Heart right ventricle (tissue), 16 donors: ENCODE measurements at regions of chr2 and their contacts with region 1.

Region 1: DNA sequence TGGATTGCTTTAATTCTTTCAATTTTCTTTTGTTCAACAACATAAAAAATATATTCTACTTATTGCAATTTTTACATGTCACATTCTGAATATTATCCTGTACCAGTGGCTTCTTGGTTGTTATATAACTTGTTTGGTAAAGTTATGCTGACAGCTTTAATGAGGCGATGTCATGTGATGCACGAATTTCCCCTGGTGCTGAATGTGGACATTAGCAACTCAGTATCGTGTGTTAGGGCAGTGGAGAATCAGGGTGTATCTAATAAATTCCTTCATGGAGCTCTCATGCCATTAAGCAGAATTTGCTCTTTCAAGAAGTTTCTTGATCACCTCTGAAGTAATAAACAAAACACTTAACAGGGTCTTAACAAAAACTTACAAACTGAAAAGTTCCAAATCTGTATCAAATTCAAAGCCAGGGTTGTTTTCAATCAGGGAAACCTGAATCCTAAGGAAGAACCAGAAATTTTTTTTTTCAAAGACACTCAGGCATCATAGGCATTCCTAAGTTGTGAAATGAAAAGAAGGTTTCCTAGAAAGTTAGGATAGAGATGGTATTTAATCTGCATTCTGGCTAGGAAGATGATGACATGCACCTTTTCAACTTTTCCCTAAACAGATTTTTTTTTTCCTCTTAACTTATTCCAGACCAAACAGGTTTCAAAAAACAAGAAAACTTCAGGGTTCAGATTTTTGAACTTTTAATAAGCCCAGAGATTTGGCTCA is 99.8 kb upstream of the DNMT3A start:
- DNase-seq: no peak
- ATAC-seq: no peak
- H3K4me3 ChIP-seq: no peak overlapping the region
- H3K27ac ChIP-seq: no peak overlapping the region
- H3K4me1 ChIP-seq: no peaks in the 10 kb centered on the region
- H3K27me3 ChIP-seq: no peaks in the 10 kb centered on the region
- CTCF ChIP-seq: no peak

Region 2: DNA sequence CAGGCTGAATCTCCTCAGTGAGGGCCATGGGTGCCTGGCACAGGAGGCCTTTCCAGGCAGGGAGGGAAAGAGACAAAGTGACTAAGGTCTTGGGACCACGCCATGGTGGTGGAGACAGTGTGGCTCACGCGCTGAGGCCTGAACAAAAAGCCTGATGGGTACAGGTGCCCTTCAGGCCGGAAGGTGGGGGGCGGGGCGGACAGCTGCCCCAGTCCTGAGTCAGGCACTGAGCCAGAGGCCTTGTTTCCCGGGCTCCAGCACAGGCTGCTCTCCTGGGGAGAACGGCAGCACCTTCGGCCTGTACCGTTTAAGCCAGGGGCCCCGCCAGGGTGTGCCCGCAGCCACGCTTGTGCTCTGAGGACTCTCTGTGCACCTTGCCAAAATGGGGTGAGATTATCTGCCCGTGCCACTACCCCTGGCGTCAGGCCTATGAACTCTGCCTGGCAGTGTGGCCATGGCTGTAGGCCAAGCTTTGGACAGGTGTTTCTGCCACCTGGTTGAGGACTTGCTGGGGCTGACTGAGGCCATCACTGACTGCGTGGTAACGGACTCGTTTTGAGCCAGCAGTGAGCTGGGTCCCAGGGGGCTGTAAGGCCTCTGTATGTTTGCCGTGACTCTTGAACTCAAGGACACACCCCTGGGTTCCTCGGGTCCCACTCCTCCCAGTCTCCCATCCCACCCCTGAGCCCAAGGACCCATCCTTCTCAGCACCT is 68.1 kb before region 1 on chr2:
- intact Hi-C with region 1: no loop called
- DNase-seq: no peak
- ATAC-seq: peak in 5 of 8 donors; percentile 8 to 20 (median 11)
- H3K4me3 ChIP-seq: no peak overlapping the region
- H3K27ac ChIP-seq: no peak overlapping the region
- H3K4me1 ChIP-seq: peaks cover 6 to 24% (median 14%) of the 10 kb centered on the region in 9 donors
- H3K27me3 ChIP-seq: no peaks in the 10 kb centered on the region
- CTCF ChIP-seq: no peak

Region 3: DNA sequence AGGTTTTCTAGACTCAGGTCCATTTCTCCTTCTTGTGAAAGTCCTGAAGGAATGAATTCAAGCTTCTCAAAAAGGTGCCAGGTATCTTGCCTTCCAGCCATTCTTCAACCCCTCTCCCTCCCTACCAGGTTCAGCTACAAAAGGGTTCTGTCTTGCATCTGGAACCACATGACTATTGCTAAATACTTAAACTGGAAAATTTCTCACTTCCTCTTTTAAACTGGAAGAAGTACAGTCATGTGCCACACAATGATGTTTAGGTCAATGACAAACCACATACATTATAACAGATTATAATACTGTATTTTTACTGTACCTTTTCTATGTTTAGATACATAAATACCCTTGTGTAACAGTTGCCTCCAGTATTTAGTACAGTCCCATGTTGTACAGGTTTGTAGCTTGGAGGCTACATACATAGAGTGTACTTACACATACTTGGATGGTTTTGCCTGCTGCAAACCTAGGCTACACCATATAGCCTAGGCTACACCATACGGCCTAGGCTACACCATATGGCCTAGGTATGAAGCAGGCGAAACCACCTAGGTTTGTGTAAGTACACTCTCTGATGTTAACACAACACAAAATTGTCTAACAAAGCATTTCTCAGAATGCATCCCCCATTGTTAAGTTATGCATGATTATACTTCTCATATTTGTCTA is 42.2 kb after region 1 on chr2:
- intact Hi-C with region 1: loop called in 1 of 10 experiments (anchors 5 kb)
- DNase-seq: no peak
- ATAC-seq: peak in 3 of 8 donors; percentile 25 to 61 (median 35)
- H3K4me3 ChIP-seq: no peak overlapping the region
- H3K27ac ChIP-seq: peak overlapping the region in 1 of 10 donors; percentile 24
- H3K4me1 ChIP-seq: peaks cover 0 to 13% (median 0%) of the 10 kb centered on the region in 9 donors
- H3K27me3 ChIP-seq: no peaks in the 10 kb centered on the region
- CTCF ChIP-seq: no peak